Transverse colon (tissue), 4 donors: ENCODE measurements at regions of chr11 and their contacts with region 1.

Region 1: GRCh38 chr11:10792398-10792975 is 16.2 kb downstream of the EIF4G2 start:
- DNase-seq: peak; percentile 91
- H3K4me3 ChIP-seq: no peak overlapping the region
- H3K27ac ChIP-seq: no peak overlapping the region
- H3K4me1 ChIP-seq: peaks cover 0 to 9% (median 3%) of the 10 kb centered on the region in 4 donors
- H3K27me3 ChIP-seq: no peaks in the 10 kb centered on the region
- CTCF ChIP-seq: peak; percentile 85 to 96 (median 89)
- EP300 ChIP-seq: no peak
- POLR2A ChIP-seq: no peak

Region 2: DNA sequence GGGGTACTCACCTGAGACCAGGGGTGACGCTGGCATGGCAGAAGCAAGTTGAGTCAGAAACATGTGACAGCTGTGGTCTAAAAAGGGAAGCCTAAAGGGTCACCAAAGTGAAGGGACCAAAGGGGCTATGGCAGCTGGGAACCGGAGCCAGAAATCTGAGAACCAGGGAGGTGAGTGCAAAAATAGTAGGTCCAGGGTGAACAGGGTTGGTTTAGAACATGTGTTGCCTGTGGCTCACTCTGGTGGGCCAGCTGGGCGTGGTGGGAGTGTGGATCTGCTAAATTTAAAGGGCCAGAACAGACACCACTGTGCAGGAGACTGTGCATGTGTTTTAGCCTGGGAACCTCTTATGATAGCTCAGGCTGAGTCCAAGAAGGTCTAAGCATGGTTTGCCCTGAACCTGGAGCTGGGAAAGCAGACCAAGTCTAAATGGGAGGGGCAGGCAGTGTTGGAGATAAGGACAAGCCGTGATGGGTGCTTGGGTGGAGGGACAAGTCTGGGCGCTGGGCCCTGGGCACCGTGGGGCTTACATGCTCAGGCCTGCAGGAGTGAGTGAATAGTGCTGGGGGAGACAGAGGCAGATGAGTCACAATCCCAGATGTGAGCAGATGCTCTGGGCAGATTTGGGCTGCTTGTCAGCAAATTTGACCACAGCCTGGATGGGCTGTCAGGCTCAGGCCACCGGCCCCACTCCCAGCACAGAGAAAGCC is 106.8 kb after region 1 on chr11:
- in situ Hi-C with region 1: no loop called
- intact Hi-C with region 1: no loop called
- DNase-seq: peak; percentile 43
- H3K4me3 ChIP-seq: no peak overlapping the region
- H3K27ac ChIP-seq: peak overlapping the region; percentile 87 to 96 (median 90)
- H3K4me1 ChIP-seq: peaks cover 25 to 44% (median 37%) of the 10 kb centered on the region in 4 donors
- H3K27me3 ChIP-seq: no peaks in the 10 kb centered on the region
- CTCF ChIP-seq: no peak
- EP300 ChIP-seq: no peak
- POLR2A ChIP-seq: no peak

Region 3: GRCh38 chr11:11022125-11022730 is 229.7 kb after region 1 on chr11:
- in situ Hi-C with region 1: loop called (anchors 5 to 10 kb)
- intact Hi-C with region 1: loop called (anchors 5 kb)
- DNase-seq: no peak
- H3K4me3 ChIP-seq: no peak overlapping the region
- H3K27ac ChIP-seq: no peak overlapping the region
- H3K4me1 ChIP-seq: no peaks in the 10 kb centered on the region
- H3K27me3 ChIP-seq: no peaks in the 10 kb centered on the region
- CTCF ChIP-seq: peak; percentile 49 to 56 (median 52)
- EP300 ChIP-seq: no peak
- POLR2A ChIP-seq: no peak

Region 4: DNA sequence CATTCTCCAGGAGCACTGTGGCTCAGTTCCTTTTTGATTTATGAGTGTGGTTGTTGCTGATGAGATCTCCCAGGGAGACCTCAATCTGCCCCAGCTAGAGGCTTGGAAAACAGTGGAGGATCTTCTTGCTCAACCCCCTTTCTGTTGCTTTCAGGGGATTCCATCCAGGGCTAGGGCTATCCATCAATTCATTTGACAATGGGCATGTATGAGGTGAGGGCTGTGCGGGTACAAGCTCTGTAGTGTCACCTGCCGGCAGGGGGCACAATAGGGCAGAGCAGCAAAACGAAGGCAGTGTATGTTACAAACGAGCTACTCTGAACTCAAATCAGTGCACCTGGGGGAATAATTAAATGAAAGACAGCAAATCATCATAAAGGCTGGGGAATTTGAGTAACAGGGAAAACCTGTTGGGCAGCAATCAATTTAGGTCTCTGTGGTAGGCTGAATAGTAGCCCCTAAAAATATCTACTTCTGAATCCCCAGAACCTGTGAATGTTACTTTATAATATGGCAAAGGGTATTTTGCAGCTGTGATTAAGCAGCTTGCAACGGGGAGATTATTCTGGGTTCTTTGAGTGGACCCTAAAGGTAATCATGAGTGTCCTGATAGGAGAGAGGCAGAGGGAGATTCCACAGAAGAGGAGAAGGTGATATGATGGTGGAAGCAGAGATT is 235.7 kb after region 1 on chr11:
- in situ Hi-C with region 1: loop called (anchors 5 to 10 kb)
- intact Hi-C with region 1: loop called (anchors 5 kb)
- DNase-seq: peak; percentile 77
- H3K4me3 ChIP-seq: no peak overlapping the region
- H3K27ac ChIP-seq: no peak overlapping the region
- H3K4me1 ChIP-seq: no peaks in the 10 kb centered on the region
- H3K27me3 ChIP-seq: no peaks in the 10 kb centered on the region
- CTCF ChIP-seq: peak; percentile 79 to 83 (median 79)
- EP300 ChIP-seq: no peak
- POLR2A ChIP-seq: no peak

Region 5: GRCh38 chr11:11416502-11416901 is 624.0 kb after region 1 on chr11:
- in situ Hi-C with region 1: no loop called
- intact Hi-C with region 1: no loop called
- DNase-seq: no peak
- H3K4me3 ChIP-seq: no peak overlapping the region
- H3K27ac ChIP-seq: peak overlapping the region in 3 of 4 donors; percentile 20 to 44 (median 22)
- H3K4me1 ChIP-seq: peaks cover 0 to 8% (median 0%) of the 10 kb centered on the region in 4 donors
- H3K27me3 ChIP-seq: no peaks in the 10 kb centered on the region
- CTCF ChIP-seq: no peak
- EP300 ChIP-seq: no peak
- POLR2A ChIP-seq: no peak